ENCODE measurements at regions of chr12 and their contacts with region 1.

Region 1: DNA sequence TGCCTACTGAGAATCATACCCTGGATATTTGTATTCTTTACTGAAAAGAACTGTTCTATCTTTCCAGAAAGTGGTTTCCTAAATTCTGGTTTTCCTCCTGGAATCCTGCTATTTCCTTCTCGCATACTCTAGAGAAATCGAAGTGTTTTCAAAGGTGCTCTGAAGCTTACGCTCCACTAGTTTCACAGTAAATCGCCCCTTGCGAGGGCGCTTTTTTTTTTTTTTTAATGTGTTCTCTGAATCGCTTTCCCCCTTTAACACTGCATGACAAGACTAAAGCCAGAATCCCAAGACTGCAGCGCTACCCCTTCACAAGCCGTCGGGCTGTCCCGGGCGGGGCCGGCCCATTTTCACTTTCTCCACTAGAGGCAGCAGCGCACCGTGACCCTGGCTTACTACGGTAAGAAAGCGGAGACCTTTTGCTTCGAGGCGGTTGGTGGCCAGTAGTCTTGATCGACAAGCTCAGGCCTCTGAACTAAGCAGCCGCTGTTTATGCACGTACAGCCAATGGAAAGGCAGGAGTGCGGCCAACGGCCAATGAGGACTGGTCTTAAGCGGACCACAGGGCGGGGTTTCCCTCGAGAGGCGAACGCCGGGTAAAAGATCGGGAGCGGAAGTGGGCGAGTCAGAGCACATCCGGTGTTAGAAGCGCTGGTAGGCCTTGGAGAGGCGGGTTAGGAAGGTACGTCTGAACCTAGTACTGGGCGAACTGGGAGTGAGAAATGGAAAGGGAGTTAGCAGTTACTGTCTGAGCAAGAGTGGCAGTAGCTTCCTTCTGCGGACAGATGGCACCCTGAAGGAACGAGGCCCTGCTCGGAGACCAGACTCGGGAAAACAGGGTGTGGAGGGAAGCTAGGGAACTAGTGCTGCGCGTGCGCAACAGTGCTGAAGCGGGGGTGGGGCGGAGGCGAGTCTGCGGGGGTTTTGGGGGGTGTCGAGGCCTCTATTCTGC is at the start of gene TMBIM6:
- DNase-seq: peak; percentile 99
- ATAC-seq: peak; percentile 96
- H3K4me3 ChIP-seq: peak within 1 kb of the TSS; percentile 77
- H3K27ac ChIP-seq: peak within 1 kb of the TSS; percentile 96
- H3K4me1 ChIP-seq: 0 out of 2 replicates have a peak, but pooled peaks cover 2% of the 10 kb centered on the region
- H3K27me3 ChIP-seq: no peaks in the 10 kb centered on the region
- CTCF ChIP-seq: peak; percentile 91 to 99 (median 98)
- EP300 ChIP-seq: no peak
- POLR2A ChIP-seq: peak; percentile 98
- RAD21 ChIP-seq: peak; percentile 80
- polyA plus RNA-seq, gene TMBIM6: 853 to 1,192 TPM

Region 2: DNA sequence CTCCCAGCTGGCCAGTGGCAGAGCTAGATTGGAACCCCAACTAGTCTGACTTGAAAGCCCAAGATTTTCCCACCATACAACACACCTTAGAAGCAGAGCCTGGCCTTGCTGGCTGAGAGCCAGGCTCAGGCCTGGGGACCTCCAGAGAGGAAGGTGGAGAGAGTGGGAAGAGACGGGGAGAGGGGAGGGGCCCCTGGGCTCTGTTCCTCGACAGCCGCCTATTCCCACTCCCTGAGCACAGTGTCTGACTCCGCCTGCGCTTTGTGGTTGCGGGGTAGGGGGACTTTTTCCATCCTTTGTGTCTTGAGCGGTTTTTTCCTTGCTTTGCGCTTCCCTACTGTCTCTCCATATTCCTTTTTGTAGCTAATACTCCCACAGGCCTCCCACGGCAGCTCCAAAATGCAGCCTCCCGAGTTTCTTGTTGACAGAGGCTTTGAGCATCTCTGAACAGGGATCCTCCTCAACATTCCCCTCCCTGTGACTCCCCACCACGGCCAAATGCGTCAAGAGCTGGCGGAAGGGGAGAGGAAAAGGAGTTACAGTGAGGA is 206.4 kb before region 1 on chr12:
- CTCF ChIA-PET with region 1: no interaction called
- POLR2A ChIA-PET with region 1: no interaction called
- RAD21 ChIA-PET with region 1: no interaction called
- SMC1A ChIA-PET with region 1: no interaction called
- in situ Hi-C with region 1: no loop called
- intact Hi-C with region 1: no loop called
- DNase-seq: no peak
- ATAC-seq: no peak
- H3K4me3 ChIP-seq: no peak overlapping the region
- H3K27ac ChIP-seq: no peak overlapping the region
- H3K4me1 ChIP-seq: peaks cover 14% of the 10 kb centered on the region
- H3K27me3 ChIP-seq: peaks cover 10 to 13% of the 10 kb centered on the region in 2 experiments
- CTCF ChIP-seq: no peak
- EP300 ChIP-seq: no peak
- POLR2A ChIP-seq: no peak
- RAD21 ChIP-seq: no peak

Region 3: GRCh38 chr12:49763006-49763591 is 21.9 kb after region 1 on chr12:
- CTCF ChIA-PET with region 1: interaction called, 46 read pairs
- POLR2A ChIA-PET with region 1: interaction called, 7 read pairs
- RAD21 ChIA-PET with region 1: interaction called, 16 read pairs
- SMC1A ChIA-PET with region 1: interaction called, 15 read pairs
- in situ Hi-C with region 1: no loop called
- intact Hi-C with region 1: no loop called
- DNase-seq: no peak
- ATAC-seq: peak; percentile 85
- H3K4me3 ChIP-seq: no peak overlapping the region
- H3K27ac ChIP-seq: peak overlapping the region; percentile 30
- H3K4me1 ChIP-seq: peaks cover 26% of the 10 kb centered on the region
- H3K27me3 ChIP-seq: no peaks in the 10 kb centered on the region
- CTCF ChIP-seq: peak; percentile 59 to 88 (median 82)
- EP300 ChIP-seq: no peak
- POLR2A ChIP-seq: no peak
- RAD21 ChIP-seq: peak; percentile 47

Region 4: GRCh38 chr12:49974231-49974675 is 233.0 kb after region 1 on chr12:
- CTCF ChIA-PET with region 1: no interaction called
- POLR2A ChIA-PET with region 1: no interaction called
- RAD21 ChIA-PET with region 1: no interaction called
- SMC1A ChIA-PET with region 1: no interaction called
- in situ Hi-C with region 1: no loop called
- intact Hi-C with region 1: no loop called
- DNase-seq: no peak
- ATAC-seq: peak; percentile 39
- H3K4me3 ChIP-seq: no peak overlapping the region
- H3K27ac ChIP-seq: no peak overlapping the region
- H3K4me1 ChIP-seq: no peaks in the 10 kb centered on the region
- H3K27me3 ChIP-seq: peaks cover 0 to 1% of the 10 kb centered on the region in 2 experiments; a peak in 1 of 4 replicates
- CTCF ChIP-seq: no peak
- EP300 ChIP-seq: no peak
- POLR2A ChIP-seq: no peak
- RAD21 ChIP-seq: no peak

Measured in GM12878 (cell line).